Naive thymus-derived CD4-positive, alpha-beta T cell (primary cell): ENCODE measurements at regions of chrX and their contacts with region 1.

Region 1: GRCh38 chrX:14029425-14030173 is at the start of gene GEMIN8:
- DNase-seq: peak; percentile 72 to 93 (median 87)
- ATAC-seq: peak; percentile 97
- H3K4me3 ChIP-seq: peak within 1 kb of the TSS; percentile 60
- H3K4me3 Mint-ChIP-seq: peak within 1 kb of the TSS; percentile 80 to 100 (median 94)
- H3K27ac ChIP-seq: peak within 1 kb of the TSS; percentile 90
- H3K27ac Mint-ChIP-seq: peak within 1 kb of the TSS; percentile 91 to 100 (median 96)
- H3K4me1 ChIP-seq: peaks cover 19 to 26% of the 10 kb centered on the region in 2 donors
- H3K4me1 Mint-ChIP-seq: peaks cover 9 to 51% (median 41%) of the 10 kb centered on the region in 7 donors
- H3K27me3 ChIP-seq: no peaks in the 10 kb centered on the region
- H3K27me3 Mint-ChIP-seq: peaks cover 0 to 1% (median 0%) of the 10 kb centered on the region in 5 donors
- total RNA-seq, gene GEMIN8: 9.7 to 20.4 (median 11.7) TPM

Region 2: GRCh38 chrX:12946838-12947544 is 1082.6 kb before region 1 on chrX:
- CTCF ChIA-PET with region 1: interaction called, 3 read pairs
- POLR2A ChIA-PET with region 1: interaction called, 3 read pairs
- intact Hi-C with region 1: loop called in 1 of 2 experiments (anchors 10 kb)
- DNase-seq: peak in 8 of 9 donors; percentile 67 to 89 (median 74)
- ATAC-seq: peak; percentile 64
- H3K4me3 ChIP-seq: peak overlapping the region; percentile 30
- H3K4me3 Mint-ChIP-seq: peak overlapping the region; percentile 16 to 84 (median 72)
- H3K27ac ChIP-seq: peak overlapping the region; percentile 80
- H3K27ac Mint-ChIP-seq: peak overlapping the region; percentile 91 to 98 (median 96)
- H3K4me1 ChIP-seq: peaks cover 39 to 41% of the 10 kb centered on the region in 2 donors
- H3K4me1 Mint-ChIP-seq: peaks cover 8 to 60% (median 53%) of the 10 kb centered on the region in 7 donors
- H3K27me3 ChIP-seq: no peaks in the 10 kb centered on the region
- H3K27me3 Mint-ChIP-seq: no peaks in the 10 kb centered on the region

Region 3: DNA sequence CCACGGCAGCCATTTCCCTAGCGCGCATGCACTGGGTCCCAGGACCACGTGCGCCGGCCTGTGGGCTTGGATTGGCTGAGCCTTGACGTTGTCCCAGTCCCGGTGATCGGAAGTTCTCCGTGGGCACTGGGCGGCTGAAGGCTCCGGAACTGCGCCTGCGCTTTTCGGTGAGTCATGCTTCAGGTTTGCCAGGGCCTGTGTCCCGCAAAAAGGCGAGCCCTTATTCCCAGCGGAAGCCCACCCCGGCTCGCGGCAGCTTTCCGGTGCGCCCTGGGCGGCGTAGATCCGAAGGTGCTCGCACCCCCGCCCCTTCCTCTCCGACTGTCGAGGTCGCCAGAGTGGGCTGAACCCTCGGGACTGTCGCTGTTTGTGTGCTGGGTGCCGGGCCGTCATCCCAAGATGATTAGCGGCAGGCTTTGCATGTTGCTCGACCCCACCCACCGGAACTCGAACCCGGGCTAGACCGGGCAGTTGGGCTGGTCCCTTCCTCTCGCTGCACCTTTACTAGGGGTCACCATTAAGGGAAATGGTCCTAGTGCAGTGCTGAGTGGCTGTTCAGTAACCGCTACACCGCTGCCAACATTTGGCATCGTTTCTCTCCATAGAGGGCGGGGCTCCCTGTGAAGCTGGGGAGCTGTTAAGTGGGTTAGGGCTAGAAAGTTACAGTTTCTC is 376.4 kb before region 1 on chrX and contains the start of gene TCEANC:
- CTCF ChIA-PET with region 1: interaction called, 6 read pairs
- POLR2A ChIA-PET with region 1: interaction called, 10 read pairs
- intact Hi-C with region 1: loop called (anchors 1 kb)
- DNase-seq: peak; percentile 77 to 96 (median 93)
- ATAC-seq: peak; percentile 97
- H3K4me3 ChIP-seq: peak within 1 kb of the TSS; percentile 93
- H3K4me3 Mint-ChIP-seq: peak within 1 kb of the TSS; percentile 79 to 96 (median 93)
- H3K27ac ChIP-seq: peak within 1 kb of the TSS; percentile 93
- H3K27ac Mint-ChIP-seq: peak within 1 kb of the TSS; percentile 91 to 98 (median 96)
- H3K4me1 ChIP-seq: peaks cover 15 to 16% of the 10 kb centered on the region in 2 donors
- H3K4me1 Mint-ChIP-seq: peaks cover 0 to 39% (median 24%) of the 10 kb centered on the region in 7 donors
- H3K27me3 ChIP-seq: no peaks in the 10 kb centered on the region
- H3K27me3 Mint-ChIP-seq: no peaks in the 10 kb centered on the region
- total RNA-seq, gene TCEANC: 5.0 to 17.5 (median 11.4) TPM

Region 4: GRCh38 chrX:13734278-13735172 is 295.1 kb before region 1 on chrX and contains the starts of genes OFD1 and TRAPPC2:
- CTCF ChIA-PET with region 1: interaction called, 3 read pairs
- POLR2A ChIA-PET with region 1: interaction called, 27 read pairs
- intact Hi-C with region 1: loop called (anchors 1 kb)
- DNase-seq: peak; percentile 76 to 92 (median 87)
- ATAC-seq: peak; percentile 94
- H3K4me3 ChIP-seq: peak within 1 kb of the TSS; percentile 85
- H3K4me3 Mint-ChIP-seq: peak within 1 kb of the TSS; percentile 82 to 99 (median 94)
- H3K27ac ChIP-seq: peak within 1 kb of the TSS; percentile 99
- H3K27ac Mint-ChIP-seq: peak within 1 kb of the TSS; percentile 95 to 99 (median 97)
- H3K4me1 ChIP-seq: peaks cover 12 to 20% of the 10 kb centered on the region in 2 donors
- H3K4me1 Mint-ChIP-seq: peaks cover 21 to 66% (median 58%) of the 10 kb centered on the region in 7 donors
- H3K27me3 ChIP-seq: no peaks in the 10 kb centered on the region
- H3K27me3 Mint-ChIP-seq: no peaks in the 10 kb centered on the region
- total RNA-seq, gene OFD1: 30.4 to 142 (median 72.5) TPM
- total RNA-seq, gene TRAPPC2: 20.7 to 31.1 (median 23.5) TPM

Region 5: DNA sequence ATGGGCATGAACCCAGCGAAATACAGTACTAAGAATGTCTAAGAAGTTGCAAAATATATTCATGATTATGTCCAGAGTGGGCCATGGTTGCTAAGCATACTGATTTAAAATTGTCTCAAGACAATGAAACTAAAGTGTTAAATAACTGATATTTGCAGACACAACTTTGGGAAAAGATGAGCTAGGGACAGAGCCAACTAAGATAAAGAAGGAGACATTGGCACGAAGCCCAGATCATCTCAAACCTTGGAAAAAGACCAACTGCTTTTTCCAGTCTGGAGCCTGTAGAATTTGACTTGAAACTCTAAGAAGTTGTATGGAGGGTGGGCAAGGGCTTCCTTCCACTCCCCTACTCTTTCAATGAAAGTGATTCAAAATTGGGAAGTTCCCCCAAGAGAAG is 391.2 kb after region 1 on chrX:
- CTCF ChIA-PET with region 1: no interaction called
- POLR2A ChIA-PET with region 1: no interaction called
- intact Hi-C with region 1: no loop called
- DNase-seq: no peak
- ATAC-seq: no peak
- H3K4me3 ChIP-seq: no peak overlapping the region
- H3K4me3 Mint-ChIP-seq: no peak overlapping the region
- H3K27ac ChIP-seq: no peak overlapping the region
- H3K27ac Mint-ChIP-seq: no peak overlapping the region
- H3K4me1 ChIP-seq: no peaks in the 10 kb centered on the region
- H3K4me1 Mint-ChIP-seq: no peaks in the 10 kb centered on the region
- H3K27me3 ChIP-seq: no peaks in the 10 kb centered on the region
- H3K27me3 Mint-ChIP-seq: peaks cover 0 to 8% (median 0%) of the 10 kb centered on the region in 5 donors

Region 6: GRCh38 chrX:14872851-14873675 is 843.5 kb after region 1 on chrX and contains the starts of genes FANCB and MOSPD2:
- CTCF ChIA-PET with region 1: no interaction called
- POLR2A ChIA-PET with region 1: no interaction called
- intact Hi-C with region 1: loop called (anchors 2 to 5 kb)
- DNase-seq: peak; percentile 83 to 96 (median 93)
- ATAC-seq: peak; percentile 95
- H3K4me3 ChIP-seq: peak within 1 kb of the TSS; percentile 76
- H3K4me3 Mint-ChIP-seq: peak within 1 kb of the TSS; percentile 82 to 94 (median 88)
- H3K27ac ChIP-seq: peak within 1 kb of the TSS; percentile 76
- H3K27ac Mint-ChIP-seq: peak within 1 kb of the TSS; percentile 75 to 93 (median 88)
- H3K4me1 ChIP-seq: peaks cover 4 to 9% of the 10 kb centered on the region in 2 donors
- H3K4me1 Mint-ChIP-seq: peaks cover 0 to 34% (median 14%) of the 10 kb centered on the region in 7 donors
- H3K27me3 ChIP-seq: no peaks in the 10 kb centered on the region
- H3K27me3 Mint-ChIP-seq: no peaks in the 10 kb centered on the region
- total RNA-seq, gene FANCB: 3.3 to 8.3 (median 4.0) TPM
- total RNA-seq, gene MOSPD2: 7.1 to 15.7 (median 13.4) TPM

Region 7: DNA sequence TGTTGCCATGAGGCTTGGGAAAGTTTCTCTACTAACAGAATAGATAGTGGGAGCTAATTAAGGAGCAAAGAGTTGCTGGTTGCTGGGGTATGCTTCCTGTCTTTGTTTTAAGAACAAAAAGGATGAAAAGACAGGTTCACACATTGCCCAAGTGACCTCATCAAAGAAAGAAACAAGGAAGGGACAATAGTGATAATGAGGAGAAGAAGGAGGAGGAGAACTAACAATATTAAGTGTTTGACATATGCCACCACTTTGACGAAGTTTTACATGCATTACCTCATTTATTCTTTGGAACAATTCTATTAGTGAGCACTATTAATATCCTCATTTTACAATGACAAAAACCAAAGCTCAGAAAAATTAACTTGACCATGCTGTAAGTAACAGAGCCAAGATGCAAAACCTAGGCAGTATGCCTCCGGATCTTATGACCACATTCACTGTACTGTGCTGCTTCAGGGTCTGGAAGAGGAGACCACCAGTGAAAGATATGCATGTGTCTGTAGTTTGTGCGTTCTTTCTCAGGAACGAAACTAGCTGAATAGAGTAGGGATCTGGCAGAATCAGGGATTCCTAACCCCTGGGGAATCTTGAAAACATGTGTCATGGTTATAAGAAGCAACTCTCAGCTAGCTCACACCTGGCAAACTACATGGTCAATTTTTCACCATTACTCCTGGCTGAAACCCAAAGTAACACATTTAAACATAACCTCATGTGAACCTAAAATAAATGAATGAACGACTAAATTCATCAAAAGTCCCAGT is 927.4 kb after region 1 on chrX:
- CTCF ChIA-PET with region 1: no interaction called
- POLR2A ChIA-PET with region 1: no interaction called
- intact Hi-C with region 1: no loop called
- DNase-seq: no peak
- ATAC-seq: no peak
- H3K4me3 ChIP-seq: no peak overlapping the region
- H3K4me3 Mint-ChIP-seq: no peak overlapping the region
- H3K27ac ChIP-seq: no peak overlapping the region
- H3K27ac Mint-ChIP-seq: no peak overlapping the region
- H3K4me1 ChIP-seq: no peaks in the 10 kb centered on the region
- H3K4me1 Mint-ChIP-seq: no peaks in the 10 kb centered on the region
- H3K27me3 ChIP-seq: no peaks in the 10 kb centered on the region
- H3K27me3 Mint-ChIP-seq: no peaks in the 10 kb centered on the region

Region 8: GRCh38 chrX:15674841-15675489 is 1645.4 kb after region 1 on chrX:
- CTCF ChIA-PET with region 1: no interaction called
- POLR2A ChIA-PET with region 1: no interaction called
- intact Hi-C with region 1: loop called (anchors 5 to 10 kb)
- DNase-seq: peak; percentile 70 to 99 (median 96)
- ATAC-seq: peak; percentile 90
- H3K4me3 ChIP-seq: peak overlapping the region; percentile 87
- H3K4me3 Mint-ChIP-seq: no peak overlapping the region
- H3K27ac ChIP-seq: peak overlapping the region; percentile 96
- H3K27ac Mint-ChIP-seq: no peak overlapping the region
- H3K4me1 ChIP-seq: peaks cover 5 to 11% of the 10 kb centered on the region in 2 donors
- H3K4me1 Mint-ChIP-seq: peaks cover 0 to 17% (median 12%) of the 10 kb centered on the region in 7 donors
- H3K27me3 ChIP-seq: no peaks in the 10 kb centered on the region
- H3K27me3 Mint-ChIP-seq: peaks cover 0 to 5% (median 0%) of the 10 kb centered on the region in 5 donors